ENCODE measurements at regions of chr6 and their contacts with region 1.

Region 1: DNA sequence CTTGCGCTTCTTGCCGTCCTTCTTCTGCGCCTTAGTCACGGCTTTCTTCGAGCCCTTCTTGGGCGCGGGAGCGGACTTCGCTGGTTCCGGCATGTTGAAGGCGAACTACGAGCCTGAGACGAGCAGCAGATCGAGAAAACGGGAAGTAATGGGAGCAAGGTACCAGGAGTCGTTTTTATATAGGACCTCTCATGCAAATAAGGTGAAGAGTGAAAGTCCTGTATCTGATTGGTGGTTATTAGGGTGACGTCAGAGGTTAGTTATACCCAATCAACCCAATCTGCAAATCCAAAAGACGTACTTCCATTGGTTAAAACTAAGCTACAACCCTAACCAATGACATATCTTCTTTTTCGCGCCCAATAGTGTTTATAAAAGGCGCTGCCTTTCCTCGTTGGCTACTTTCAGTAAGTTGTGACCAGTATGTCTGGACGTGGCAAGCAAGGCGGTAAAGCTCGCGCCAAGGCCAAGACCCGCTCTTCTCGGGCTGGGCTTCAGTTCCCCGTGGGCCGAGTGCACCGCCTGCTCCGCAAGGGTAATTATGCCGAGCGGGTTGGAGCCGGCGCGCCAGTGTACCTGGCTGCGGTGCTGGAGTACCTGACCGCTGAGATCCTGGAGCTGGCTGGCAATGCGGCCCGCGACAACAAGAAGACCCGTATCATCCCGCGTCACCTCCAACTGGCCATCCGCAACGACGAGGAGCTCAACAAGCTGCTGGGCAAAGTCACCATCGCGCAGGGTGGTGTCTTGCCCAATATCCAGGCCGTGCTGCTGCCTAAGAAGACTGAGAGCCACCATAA is 100.6 kb upstream of the PRSS16 start:
- DNase-seq: peak; percentile 98
- ATAC-seq: peak; percentile 70
- H3K4me3 ChIP-seq: peak overlapping the region; percentile 82
- H3K27ac ChIP-seq: peak overlapping the region; percentile 86
- H3K4me1 ChIP-seq: peaks cover 22% of the 10 kb centered on the region; the same call in 1 of the 2 replicates
- H3K27me3 ChIP-seq: no peaks in the 10 kb centered on the region
- CTCF ChIP-seq: no peak

Region 2: DNA sequence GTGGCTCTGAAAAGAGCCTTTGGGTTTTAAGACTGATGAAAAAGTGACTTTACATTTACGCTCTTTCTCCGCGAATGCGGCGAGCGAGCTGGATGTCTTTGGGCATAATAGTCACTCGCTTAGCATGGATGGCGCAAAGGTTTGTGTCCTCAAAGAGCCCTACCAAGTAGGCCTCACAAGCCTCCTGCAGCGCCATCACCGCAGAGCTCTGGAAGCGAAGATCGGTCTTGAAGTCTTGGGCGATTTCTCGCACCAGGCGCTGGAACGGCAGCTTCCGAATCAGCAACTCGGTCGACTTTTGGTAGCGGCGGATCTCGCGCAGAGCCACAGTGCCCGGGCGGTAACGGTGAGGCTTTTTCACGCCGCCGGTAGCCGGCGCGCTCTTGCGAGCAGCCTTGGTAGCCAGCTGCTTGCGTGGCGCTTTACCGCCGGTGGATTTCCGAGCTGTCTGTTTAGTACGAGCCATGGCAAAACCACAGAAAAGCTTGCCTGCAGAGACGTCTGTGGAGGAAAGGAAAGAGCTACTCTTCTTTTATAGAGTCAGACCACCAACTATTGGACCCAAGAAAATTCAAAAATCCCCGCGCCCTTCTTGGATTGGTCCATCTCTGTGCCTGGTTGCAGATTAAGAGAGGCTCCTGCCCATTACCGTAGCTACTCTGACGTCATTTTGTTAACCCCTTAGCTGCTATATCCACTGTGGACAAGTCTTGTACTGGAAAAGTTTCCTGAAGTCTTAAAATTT is 1115.1 kb before region 1 on chr6:
- CTCF ChIA-PET with region 1: no interaction called
- POLR2A ChIA-PET with region 1: no interaction called
- intact Hi-C with region 1: loop called (anchors 2 kb)
- DNase-seq: peak; percentile 99
- ATAC-seq: peak; percentile 60
- H3K4me3 ChIP-seq: peak overlapping the region; percentile 83
- H3K27ac ChIP-seq: peak overlapping the region; percentile 82
- H3K4me1 ChIP-seq: peaks cover 40% of the 10 kb centered on the region
- H3K27me3 ChIP-seq: no peaks in the 10 kb centered on the region
- CTCF ChIP-seq: no peak

Region 3: DNA sequence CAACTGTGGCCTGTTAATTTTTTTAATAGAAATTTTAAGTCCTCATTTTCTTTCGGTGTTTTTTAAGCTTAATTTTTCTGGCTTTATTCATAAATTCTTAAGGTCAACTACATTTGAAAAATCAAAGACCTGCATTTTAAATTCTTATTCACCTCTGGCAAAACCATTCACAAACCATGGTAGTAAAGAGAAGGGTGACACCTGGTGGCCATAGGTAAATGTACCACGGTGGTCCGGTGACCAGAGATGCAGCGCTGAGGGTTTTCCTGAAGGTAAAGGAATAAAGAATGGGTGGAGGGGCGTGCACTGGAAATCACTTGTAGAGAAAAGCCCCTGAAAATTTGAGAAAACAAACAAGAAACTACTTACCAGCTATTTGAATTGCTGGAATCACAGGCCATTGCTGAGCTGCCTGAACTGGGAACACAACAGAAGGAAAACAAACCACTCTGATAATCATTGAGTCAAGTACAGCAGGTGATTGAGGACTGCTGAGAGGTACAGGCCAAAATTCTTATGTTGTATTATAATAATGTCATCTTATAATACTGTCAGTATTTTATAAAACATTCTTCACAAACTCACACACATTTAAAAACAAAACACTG is 1049.5 kb before region 1 on chr6:
- CTCF ChIA-PET with region 1: no interaction called
- POLR2A ChIA-PET with region 1: interaction called, 16 read pairs
- intact Hi-C with region 1: no loop called
- DNase-seq: peak; percentile 78
- ATAC-seq: peak; percentile 87
- H3K4me3 ChIP-seq: no peak overlapping the region
- H3K27ac ChIP-seq: no peak overlapping the region
- H3K4me1 ChIP-seq: peaks cover 2% of the 10 kb centered on the region
- H3K27me3 ChIP-seq: no peaks in the 10 kb centered on the region
- CTCF ChIP-seq: peak; percentile 92

Region 4: DNA sequence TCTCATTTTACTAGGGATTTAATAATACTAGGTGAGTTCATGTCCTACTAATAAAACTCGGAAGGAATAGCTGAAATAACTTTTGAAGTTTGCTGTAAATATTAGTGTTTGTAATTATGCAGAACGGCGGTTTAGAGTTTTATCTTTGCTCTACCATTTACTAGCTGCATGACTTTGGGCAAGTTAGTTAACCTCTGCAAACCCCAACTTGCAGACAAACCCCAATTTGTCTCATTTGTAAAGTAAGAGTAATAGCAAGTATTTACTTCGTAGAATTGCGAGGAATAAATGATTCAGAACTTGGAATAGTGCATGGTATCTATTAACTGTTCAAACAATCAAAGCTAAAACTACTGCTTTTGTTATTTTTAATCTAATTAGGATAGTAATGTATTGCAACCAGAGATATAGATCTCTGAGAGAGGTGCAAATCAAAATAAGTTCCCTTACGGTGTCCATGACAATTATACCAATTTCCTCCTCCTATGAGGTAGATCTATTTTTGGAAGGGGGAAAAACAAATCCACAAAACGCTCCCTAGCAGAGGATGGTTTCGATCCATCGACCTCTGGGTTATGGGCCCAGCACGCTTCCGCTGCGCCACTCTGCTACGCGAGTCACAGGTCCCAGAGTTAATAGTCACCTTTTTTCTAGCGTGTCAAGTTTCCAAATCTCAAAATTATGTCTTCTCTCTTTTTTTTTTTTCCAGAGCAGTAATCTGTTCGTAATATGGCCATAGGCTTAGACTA is 817.0 kb before region 1 on chr6:
- CTCF ChIA-PET with region 1: no interaction called
- POLR2A ChIA-PET with region 1: interaction called, 11 read pairs
- intact Hi-C with region 1: loop called (anchors 5 kb)
- DNase-seq: peak; percentile 83
- ATAC-seq: peak; percentile 44
- H3K4me3 ChIP-seq: peak overlapping the region; percentile 86
- H3K27ac ChIP-seq: no peak overlapping the region
- H3K4me1 ChIP-seq: peaks cover 16% of the 10 kb centered on the region; the same call in 1 of the 2 replicates
- H3K27me3 ChIP-seq: no peaks in the 10 kb centered on the region
- CTCF ChIP-seq: no peak

Region 5: DNA sequence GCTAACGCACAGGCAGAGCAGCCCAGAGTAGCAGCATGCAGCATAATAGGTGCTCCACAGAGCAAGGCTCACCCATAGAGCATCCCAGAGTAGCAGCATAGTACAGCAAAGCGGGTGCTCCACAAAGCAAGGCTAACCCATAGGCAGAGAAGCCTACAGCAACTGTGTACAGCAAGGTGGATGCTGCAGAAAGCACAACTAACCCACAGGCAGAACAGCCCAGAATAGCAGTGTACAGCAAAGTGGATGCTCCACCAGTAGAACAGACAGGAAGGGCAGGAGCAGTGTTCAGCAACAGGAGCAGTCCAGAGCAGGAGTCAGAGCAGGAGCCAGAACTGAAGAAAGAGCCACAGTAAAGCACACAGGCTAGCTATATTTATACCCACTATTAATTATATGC is 32.1 kb before region 1 on chr6:
- CTCF ChIA-PET with region 1: no interaction called
- POLR2A ChIA-PET with region 1: no interaction called
- intact Hi-C with region 1: no loop called
- DNase-seq: no peak
- ATAC-seq: no peak
- H3K4me3 ChIP-seq: no peak overlapping the region
- H3K27ac ChIP-seq: no peak overlapping the region
- H3K4me1 ChIP-seq: no peaks in the 10 kb centered on the region
- H3K27me3 ChIP-seq: no peaks in the 10 kb centered on the region
- CTCF ChIP-seq: no peak

Region 6: GRCh38 chr6:27157459-27158315 is 10.8 kb after region 1 on chr6:
- CTCF ChIA-PET with region 1: no interaction called
- POLR2A ChIA-PET with region 1: interaction called, 20 read pairs
- intact Hi-C with region 1: no loop called
- DNase-seq: peak; percentile 87
- ATAC-seq: peak; percentile 75
- H3K4me3 ChIP-seq: peak overlapping the region; percentile 81
- H3K27ac ChIP-seq: no peak overlapping the region
- H3K4me1 ChIP-seq: peaks cover 10% of the 10 kb centered on the region
- H3K27me3 ChIP-seq: no peaks in the 10 kb centered on the region
- CTCF ChIP-seq: peak; percentile 47; the same call in 1 of the 2 replicates

Region 7: DNA sequence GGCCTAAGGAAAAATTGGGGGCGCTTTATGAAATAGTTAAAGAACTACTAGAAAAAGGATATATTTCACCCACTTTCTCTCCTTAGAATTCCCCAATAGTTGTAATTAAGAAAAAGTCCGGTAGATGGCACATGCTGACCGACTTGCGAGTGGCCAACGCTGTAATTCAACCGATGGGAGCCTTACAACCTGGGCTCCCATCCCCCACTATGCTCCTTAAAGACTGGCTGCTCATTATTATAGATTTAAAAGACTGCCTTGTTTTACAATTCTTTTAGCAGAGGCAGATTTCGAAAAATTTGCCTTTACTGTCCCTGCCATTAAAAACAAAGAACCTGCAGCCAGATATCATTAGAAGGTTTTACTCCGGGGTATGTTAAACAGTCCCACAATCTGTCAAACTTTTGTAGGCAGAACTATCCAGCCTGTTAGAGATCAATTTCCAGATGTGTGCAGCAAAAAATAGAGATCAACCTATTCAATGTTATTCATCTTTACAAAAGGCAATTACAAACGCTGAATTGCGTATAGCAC is 42.0 kb after region 1 on chr6:
- CTCF ChIA-PET with region 1: no interaction called
- POLR2A ChIA-PET with region 1: no interaction called
- intact Hi-C with region 1: no loop called
- DNase-seq: peak; percentile 91
- ATAC-seq: peak; percentile 80
- H3K4me3 ChIP-seq: peak overlapping the region; percentile 81
- H3K27ac ChIP-seq: peak overlapping the region; percentile 41
- H3K4me1 ChIP-seq: no peaks in the 10 kb centered on the region
- H3K27me3 ChIP-seq: no peaks in the 10 kb centered on the region
- CTCF ChIP-seq: peak; percentile 81

Region 8: DNA sequence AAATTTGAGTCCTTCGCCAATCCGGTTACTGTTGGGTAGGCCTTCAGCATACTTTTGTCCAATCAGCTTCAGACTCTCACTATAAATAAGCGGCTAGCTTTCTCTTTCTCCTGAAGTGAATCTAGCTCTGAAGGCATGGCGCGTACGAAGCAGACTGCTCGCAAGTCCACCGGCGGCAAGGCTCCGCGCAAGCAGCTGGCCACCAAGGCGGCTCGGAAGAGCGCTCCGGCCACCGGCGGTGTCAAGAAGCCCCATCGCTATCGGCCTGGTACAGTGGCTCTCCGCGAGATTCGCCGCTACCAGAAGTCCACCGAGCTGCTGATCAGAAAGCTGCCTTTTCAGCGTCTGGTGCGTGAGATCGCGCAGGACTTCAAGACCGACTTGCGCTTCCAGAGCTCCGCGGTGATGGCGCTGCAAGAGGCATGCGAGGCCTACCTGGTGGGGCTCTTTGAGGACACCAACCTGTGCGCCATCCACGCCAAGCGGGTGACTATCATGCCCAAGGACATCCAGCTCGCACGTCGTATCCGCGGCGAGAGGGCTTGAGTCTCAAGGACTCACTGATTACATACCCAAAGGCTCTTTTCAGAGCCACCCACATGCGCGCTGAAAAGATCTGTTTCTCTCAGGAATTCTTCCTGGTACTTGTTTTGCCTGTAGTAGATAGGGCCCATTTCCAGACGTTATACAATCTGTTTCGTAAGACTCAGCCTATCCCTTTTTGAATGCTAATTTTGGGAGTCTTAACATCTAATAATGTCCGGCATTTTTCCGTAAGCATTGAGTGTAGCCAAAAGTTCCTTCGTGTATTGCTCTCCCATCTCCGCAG is 663.2 kb after region 1 on chr6:
- CTCF ChIA-PET with region 1: no interaction called
- POLR2A ChIA-PET with region 1: interaction called, 9 read pairs
- intact Hi-C with region 1: loop called (anchors 5 kb)
- DNase-seq: peak; percentile 99
- ATAC-seq: peak; percentile 28
- H3K4me3 ChIP-seq: peak overlapping the region; percentile 76
- H3K27ac ChIP-seq: peak overlapping the region; percentile 65
- H3K4me1 ChIP-seq: peaks cover 28% of the 10 kb centered on the region
- H3K27me3 ChIP-seq: no peaks in the 10 kb centered on the region
- CTCF ChIP-seq: 0 out of 2 replicates have a peak, but pooled peaks have one; percentile 14

Measured in PC-3 (cell line).